ENCODE measurements at regions of chr7 and their contacts with region 1.

Region 1: GRCh38 chr7:130804220-130804619 is 70.2 kb upstream of the KLF14 start:
- DNase-seq: no peak
- H3K4me3 Mint-ChIP-seq: no peak overlapping the region
- H3K27ac Mint-ChIP-seq: no peak overlapping the region
- H3K4me1 Mint-ChIP-seq: no peaks in the 10 kb centered on the region
- H3K27me3 Mint-ChIP-seq: peaks cover 11% of the 10 kb centered on the region
- CTCF ChIP-seq: no peak

Region 2: GRCh38 chr7:130793855-130794618 is 10.2 kb before region 1 on chr7:
- CTCF ChIA-PET with region 1: interaction called, 10 read pairs
- POLR2A ChIA-PET with region 1: interaction called, 3 read pairs
- intact Hi-C with region 1: no loop called
- DNase-seq: peak; percentile 56
- H3K4me3 Mint-ChIP-seq: peak overlapping the region; percentile 69
- H3K27ac Mint-ChIP-seq: peak overlapping the region; percentile 94
- H3K4me1 Mint-ChIP-seq: peaks cover 14% of the 10 kb centered on the region
- H3K27me3 Mint-ChIP-seq: no peaks in the 10 kb centered on the region
- CTCF ChIP-seq: no peak

Measured in MCF 10A (cell line).